Thyroid gland (tissue), 4 donors: ENCODE measurements at regions of chr10 and their contacts with region 1.

Region 1: DNA sequence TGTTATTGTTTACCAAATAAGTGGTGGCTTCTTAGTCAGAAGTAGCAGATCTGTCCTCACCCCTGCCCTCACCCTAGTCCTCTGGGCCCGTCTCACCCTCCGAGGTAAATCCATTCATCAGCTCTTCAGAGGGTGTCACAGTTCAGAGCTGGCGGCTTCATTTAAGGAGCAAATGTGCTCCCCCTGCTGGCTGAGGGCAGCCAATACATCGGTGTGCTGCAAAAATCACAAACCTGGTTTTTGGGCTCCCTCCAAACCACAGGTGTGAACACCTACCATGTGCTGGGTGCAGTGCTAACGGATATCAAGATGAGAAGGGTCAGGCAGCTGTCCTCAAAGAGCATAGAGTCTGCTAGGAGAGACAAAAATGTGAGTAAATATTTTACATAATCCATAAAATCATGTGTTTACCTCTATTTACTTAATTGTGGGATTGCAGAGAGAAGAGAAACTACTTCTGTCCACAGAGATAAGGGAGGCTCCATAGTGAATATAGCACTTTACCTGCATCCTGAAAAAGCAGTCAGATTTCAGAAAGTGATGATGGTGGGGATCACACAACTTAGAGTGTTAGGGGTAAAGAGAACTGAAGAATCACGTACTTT is 15.5 kb upstream of the CRTAC1 start:
- DNase-seq: peak; percentile 58 to 69
- H3K4me3 ChIP-seq: no peak overlapping the region
- H3K27ac ChIP-seq: no peak overlapping the region
- H3K4me1 ChIP-seq: no peaks in the 10 kb centered on the region
- H3K27me3 ChIP-seq: no peaks in the 10 kb centered on the region
- CTCF ChIP-seq: peak; percentile 68 to 83 (median 76)
- POLR2A ChIP-seq: no peak

Region 2: DNA sequence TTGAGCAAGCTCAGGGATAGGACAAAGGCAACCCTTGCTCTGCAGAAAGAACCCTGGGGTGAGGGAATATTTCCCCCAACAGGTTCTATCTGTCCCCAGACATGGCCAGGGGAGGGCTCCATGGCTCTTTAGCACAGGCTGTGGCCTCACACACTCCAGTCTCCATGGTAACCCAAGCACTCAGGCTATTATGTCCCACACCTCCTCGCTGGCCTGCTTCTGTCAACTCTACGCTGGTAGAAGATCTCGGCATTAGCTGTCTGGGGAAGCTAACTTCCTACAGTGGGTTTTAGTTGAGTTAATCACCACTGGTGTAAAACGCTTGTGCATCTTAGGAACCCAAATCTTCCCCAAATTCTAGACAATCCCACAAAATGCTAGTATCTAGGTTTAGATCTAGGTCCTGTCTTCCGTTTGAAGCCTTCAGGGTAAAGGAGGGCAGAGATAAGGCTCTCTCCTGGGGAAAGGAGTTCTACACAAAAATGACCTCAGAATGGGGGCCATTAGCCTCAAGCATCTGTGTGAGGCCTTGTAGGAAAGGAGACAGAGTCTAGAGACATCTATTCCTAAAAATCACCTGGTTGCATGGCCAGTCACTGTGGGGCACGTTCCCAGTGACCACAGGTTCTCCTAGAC is 823.4 kb before region 1 on chr10:
- intact Hi-C with region 1: no loop called
- DNase-seq: peak in 1 of 2 donors; percentile 10
- H3K4me3 ChIP-seq: no peak overlapping the region
- H3K27ac ChIP-seq: no peak overlapping the region
- H3K4me1 ChIP-seq: no peaks in the 10 kb centered on the region
- H3K27me3 ChIP-seq: no peaks in the 10 kb centered on the region
- CTCF ChIP-seq: no peak
- POLR2A ChIP-seq: no peak

Region 3: GRCh38 chr10:97792141-97792721 is 253.7 kb before region 1 on chr10:
- intact Hi-C with region 1: loop called (anchors 10 kb)
- DNase-seq: peak; percentile 71 to 77
- H3K4me3 ChIP-seq: no peak overlapping the region
- H3K27ac ChIP-seq: no peak overlapping the region
- H3K4me1 ChIP-seq: peaks cover 0 to 9% of the 10 kb centered on the region in 2 donors
- H3K27me3 ChIP-seq: no peaks in the 10 kb centered on the region
- CTCF ChIP-seq: peak; percentile 79 to 91 (median 83)
- POLR2A ChIP-seq: no peak

Region 4: GRCh38 chr10:97914837-97915211 is 131.1 kb before region 1 on chr10:
- intact Hi-C with region 1: loop called (anchors 2 kb)
- DNase-seq: peak; percentile 90
- H3K4me3 ChIP-seq: no peak overlapping the region
- H3K27ac ChIP-seq: no peak overlapping the region
- H3K4me1 ChIP-seq: peaks cover 16 to 31% of the 10 kb centered on the region in 2 donors
- H3K27me3 ChIP-seq: no peaks in the 10 kb centered on the region
- CTCF ChIP-seq: peak; percentile 60 to 96 (median 89)
- POLR2A ChIP-seq: no peak